MCF 10A (cell line): ENCODE measurements at regions of chr11 and their contacts with region 1.

Region 1: DNA sequence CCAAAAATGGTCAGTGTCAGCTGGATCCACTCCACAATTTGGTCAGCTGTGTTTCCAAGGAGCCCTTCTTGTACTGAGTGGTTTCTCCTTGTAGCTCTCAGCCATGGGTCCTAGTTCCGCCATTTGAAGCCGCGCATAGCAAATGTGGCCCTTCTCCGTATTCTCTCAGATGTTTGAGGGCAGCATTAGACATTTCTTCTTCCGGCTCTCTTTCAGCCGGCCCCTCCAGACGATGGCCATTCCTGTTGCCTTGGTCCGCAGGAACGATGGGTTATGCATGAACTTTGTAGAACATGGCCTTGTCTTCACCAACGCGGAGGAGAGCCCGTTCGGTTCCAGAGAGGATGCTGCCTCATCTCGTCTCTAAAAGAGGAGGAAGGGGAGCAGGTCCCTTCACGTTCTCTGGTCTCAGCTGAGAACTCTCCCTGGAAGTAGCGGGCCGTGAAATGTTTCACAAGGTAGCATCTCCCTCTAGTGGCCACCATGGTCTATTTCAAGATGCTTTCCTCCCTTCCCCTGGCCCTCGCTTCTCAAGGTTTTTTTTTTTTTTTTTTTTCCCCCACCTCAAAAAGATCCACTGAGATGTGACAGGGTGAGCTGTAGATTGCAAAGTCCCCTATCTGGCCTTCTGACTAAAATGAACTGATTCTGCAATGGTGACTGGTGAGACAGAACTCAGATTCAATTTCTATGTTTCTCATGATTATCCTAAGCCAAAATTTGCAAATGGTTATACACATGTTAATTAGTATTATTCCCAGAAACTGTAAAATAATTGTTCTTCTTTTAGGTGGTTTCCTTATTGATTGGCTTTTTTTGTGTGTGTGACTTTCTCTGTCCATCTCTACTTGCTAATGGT is 19.8 kb upstream of the PLET1 start:
- DNase-seq: peak; percentile 85
- H3K4me3 Mint-ChIP-seq: peak overlapping the region; percentile 78
- H3K27ac Mint-ChIP-seq: no peak overlapping the region
- H3K4me1 Mint-ChIP-seq: peaks cover 5% of the 10 kb centered on the region
- H3K27me3 Mint-ChIP-seq: peaks cover 5% of the 10 kb centered on the region
- CTCF ChIP-seq: peak; percentile 50

Region 2: GRCh38 chr11:112174789-112175598 is 105.5 kb before region 1 on chr11 and contains the start of gene BCO2:
- CTCF ChIA-PET with region 1: interaction called, 4 read pairs
- POLR2A ChIA-PET with region 1: no interaction called
- intact Hi-C with region 1: loop called (anchors 1 kb)
- DNase-seq: peak; percentile 83
- H3K4me3 Mint-ChIP-seq: peak within 1 kb of the TSS; percentile 66
- H3K27ac Mint-ChIP-seq: peak within 1 kb of the TSS; percentile 93
- H3K4me1 Mint-ChIP-seq: peaks cover 15% of the 10 kb centered on the region
- H3K27me3 Mint-ChIP-seq: no peaks in the 10 kb centered on the region
- CTCF ChIP-seq: peak; percentile 83
- total RNA-seq, gene BCO2: 0.93 TPM in 1 of 2 replicates, not detected in the other

Region 3: DNA sequence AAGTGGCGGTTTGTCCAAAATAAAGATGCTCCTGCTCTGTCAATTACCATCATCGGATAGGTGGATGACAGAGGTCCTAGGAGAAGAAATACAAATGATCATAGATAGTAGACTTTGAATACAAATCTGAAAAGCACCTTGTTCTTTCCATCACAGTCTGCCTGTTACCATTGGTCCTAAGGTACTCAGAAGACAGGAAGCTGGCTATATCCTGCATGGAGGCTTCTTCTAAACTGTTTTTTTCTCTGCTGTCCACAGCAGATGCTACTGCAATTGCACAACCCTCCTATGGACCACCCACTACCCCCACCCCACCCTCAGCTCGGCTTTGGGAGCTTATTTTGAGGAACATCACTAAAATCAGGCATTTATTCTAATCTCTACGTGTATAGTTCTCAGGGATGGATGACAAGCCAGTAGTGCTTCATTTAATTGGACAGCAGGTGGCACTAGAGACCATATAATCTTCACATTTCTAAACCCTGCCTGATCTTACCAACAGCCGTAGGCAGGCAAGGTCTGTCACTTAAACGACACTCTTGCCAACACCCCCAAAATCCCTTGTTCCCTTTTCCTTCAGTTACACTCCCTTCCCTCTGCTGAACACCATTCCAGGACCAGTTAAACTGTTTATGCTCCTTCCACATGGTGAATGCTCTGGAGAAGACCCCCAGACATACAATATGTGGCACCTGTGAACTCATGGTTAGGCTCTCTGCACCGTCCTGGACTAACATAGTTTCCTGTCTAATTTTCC is 60.8 kb before region 1 on chr11:
- CTCF ChIA-PET with region 1: interaction called, 428 read pairs
- POLR2A ChIA-PET with region 1: interaction called, 17 read pairs
- intact Hi-C with region 1: loop called (anchors 1 kb)
- DNase-seq: peak; percentile 84
- H3K4me3 Mint-ChIP-seq: no peak overlapping the region
- H3K27ac Mint-ChIP-seq: peak overlapping the region; percentile 21
- H3K4me1 Mint-ChIP-seq: peaks cover 27% of the 10 kb centered on the region
- H3K27me3 Mint-ChIP-seq: no peaks in the 10 kb centered on the region
- CTCF ChIP-seq: peak; percentile 76

Region 4: DNA sequence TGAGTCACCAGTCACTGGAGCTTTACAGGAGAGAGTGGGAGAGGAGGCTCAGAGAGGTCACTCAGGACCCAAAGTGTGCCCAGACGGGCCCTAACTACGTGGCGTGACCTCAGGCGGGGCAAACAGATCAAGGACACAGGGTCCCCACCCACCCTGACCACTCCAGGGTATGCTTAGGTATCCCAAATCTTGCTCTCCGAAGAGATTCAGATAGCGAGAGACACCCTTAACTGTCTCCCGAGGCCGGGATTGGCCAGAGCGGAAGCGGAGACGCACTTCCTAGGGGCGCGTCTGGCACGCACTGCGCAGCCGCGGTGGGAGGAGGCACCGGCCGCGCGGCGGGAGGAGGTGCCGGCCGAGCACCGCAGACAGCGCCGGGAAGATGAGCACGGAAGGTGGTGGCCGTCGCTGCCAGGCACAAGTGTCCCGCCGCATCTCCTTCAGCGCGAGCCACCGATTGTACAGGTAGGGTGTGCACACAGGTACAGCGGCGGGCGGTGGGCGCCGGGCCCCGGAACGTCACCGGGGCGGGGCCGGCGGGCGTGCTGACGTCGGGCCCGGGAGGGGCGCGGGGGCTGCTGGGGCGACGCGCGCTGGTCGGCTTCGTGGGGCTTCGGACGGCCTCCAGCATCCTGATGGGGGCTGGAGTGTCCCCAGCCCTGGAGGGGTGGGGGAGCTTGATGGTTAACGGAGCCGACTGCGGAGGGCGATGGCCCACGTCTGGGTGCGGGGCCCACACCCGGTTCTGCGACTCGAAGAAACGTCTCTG is 54.3 kb before region 1 on chr11 and contains the start of gene PTS:
- CTCF ChIA-PET with region 1: interaction called, 428 read pairs
- POLR2A ChIA-PET with region 1: interaction called, 14 read pairs
- intact Hi-C with region 1: no loop called
- DNase-seq: peak; percentile 90
- H3K4me3 Mint-ChIP-seq: peak within 1 kb of the TSS; percentile 88
- H3K27ac Mint-ChIP-seq: peak within 1 kb of the TSS; percentile 96
- H3K4me1 Mint-ChIP-seq: peaks cover 19% of the 10 kb centered on the region
- H3K27me3 Mint-ChIP-seq: no peaks in the 10 kb centered on the region
- CTCF ChIP-seq: no peak
- total RNA-seq, gene PTS: 68.3 and 79.4 TPM in 2 replicates

Region 5: GRCh38 chr11:112265721-112266409 is 14.6 kb before region 1 on chr11:
- CTCF ChIA-PET with region 1: interaction called, 17 read pairs
- POLR2A ChIA-PET with region 1: interaction called, 3 read pairs
- intact Hi-C with region 1: no loop called
- DNase-seq: no peak
- H3K4me3 Mint-ChIP-seq: no peak overlapping the region
- H3K27ac Mint-ChIP-seq: no peak overlapping the region
- H3K4me1 Mint-ChIP-seq: peaks cover 6% of the 10 kb centered on the region
- H3K27me3 Mint-ChIP-seq: peaks cover 13% of the 10 kb centered on the region
- CTCF ChIP-seq: no peak

Region 6: DNA sequence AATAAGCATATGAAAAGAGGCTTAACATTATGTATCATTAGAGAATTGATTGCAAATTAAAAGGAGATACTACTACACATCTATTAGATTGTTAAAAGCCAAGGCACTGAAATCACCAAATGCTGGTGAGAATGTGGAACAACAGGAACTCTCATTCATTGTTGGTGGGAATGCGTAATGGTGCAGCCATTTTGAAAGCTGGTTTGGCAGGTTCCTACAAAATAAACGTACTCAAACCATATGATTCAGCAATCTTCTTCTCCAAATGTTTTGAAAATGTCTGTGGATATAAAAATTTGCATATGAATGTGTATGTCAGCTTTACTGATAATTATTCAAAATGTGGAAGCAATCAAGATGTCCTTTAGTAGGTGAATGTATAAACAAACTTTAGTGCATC is 156.6 kb after region 1 on chr11:
- CTCF ChIA-PET with region 1: no interaction called
- POLR2A ChIA-PET with region 1: no interaction called
- intact Hi-C with region 1: no loop called
- DNase-seq: no peak
- H3K4me3 Mint-ChIP-seq: no peak overlapping the region
- H3K27ac Mint-ChIP-seq: no peak overlapping the region
- H3K4me1 Mint-ChIP-seq: no peaks in the 10 kb centered on the region
- H3K27me3 Mint-ChIP-seq: peaks cover 96% of the 10 kb centered on the region
- CTCF ChIP-seq: no peak

Region 7: DNA sequence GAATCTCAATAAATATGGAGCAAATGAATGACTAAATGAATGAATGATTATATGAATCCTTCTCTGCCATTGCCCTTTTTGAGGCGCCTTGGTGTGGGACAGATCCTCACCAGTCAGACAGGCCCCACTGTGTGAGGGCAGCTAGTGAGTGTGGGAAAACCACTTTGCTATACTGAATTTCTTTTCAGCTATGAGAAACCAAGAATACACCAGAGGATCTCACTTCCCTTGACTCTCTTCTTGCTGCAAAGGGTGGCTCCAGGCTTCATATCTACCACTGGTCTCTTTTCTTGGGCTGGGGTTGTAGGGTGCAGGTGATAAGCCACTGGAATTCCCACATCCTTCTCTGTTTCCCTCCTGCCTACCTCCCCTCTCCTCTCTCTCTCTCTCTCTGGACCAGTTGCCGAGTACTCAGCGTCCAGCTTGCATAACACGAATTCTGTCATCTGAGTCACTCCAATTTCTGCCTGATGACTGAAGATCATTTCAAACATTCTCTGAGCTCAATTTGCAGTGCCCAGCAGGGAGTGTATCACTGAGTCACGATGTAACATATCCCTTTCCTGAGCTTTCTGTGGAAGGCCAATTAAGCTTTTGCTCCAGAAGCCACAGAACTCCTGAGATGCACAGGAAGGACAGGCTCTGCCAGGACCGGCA is 376.4 kb after region 1 on chr11:
- CTCF ChIA-PET with region 1: no interaction called
- POLR2A ChIA-PET with region 1: no interaction called
- intact Hi-C with region 1: no loop called
- DNase-seq: peak; percentile 89
- H3K4me3 Mint-ChIP-seq: no peak overlapping the region
- H3K27ac Mint-ChIP-seq: no peak overlapping the region
- H3K4me1 Mint-ChIP-seq: peaks cover 39% of the 10 kb centered on the region
- H3K27me3 Mint-ChIP-seq: no peaks in the 10 kb centered on the region
- CTCF ChIP-seq: no peak